PC-3 (cell line): ENCODE measurements at regions of chr4 and their contacts with region 1.

Region 1: GRCh38 chr4:142353149-142353738 is 492.9 kb downstream of the INPP4B start:
- DNase-seq: peak; percentile 88
- ATAC-seq: peak; percentile 55
- H3K4me3 ChIP-seq: no peak overlapping the region; the same call in 1 of the 2 replicates
- H3K27ac ChIP-seq: peak overlapping the region; percentile 31
- H3K4me1 ChIP-seq: peaks cover 46% of the 10 kb centered on the region
- H3K27me3 ChIP-seq: no peaks in the 10 kb centered on the region
- CTCF ChIP-seq: peak; percentile 96

Region 2: DNA sequence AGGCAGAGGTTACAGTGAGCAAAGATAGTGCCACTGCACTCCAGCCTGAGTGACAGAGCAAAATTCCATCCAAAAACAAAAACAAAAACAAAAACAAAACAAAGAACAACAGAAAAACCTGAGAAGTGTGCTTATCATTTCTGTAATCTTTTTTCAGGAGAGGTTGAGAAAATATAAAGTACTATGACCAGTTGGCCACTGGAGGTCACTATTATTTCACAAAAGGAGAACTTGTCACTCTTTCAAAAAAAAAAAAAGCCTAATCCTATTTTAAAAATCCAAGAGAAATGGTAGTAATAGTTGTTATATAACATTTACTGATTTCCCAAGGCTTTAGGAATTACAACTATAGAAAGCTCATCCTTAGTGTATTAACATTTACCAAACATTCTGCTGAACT is 1195.0 kb before region 1 on chr4:
- CTCF ChIA-PET with region 1: no interaction called
- POLR2A ChIA-PET with region 1: no interaction called
- intact Hi-C with region 1: loop called (anchors 5 kb)
- DNase-seq: peak; percentile 51
- ATAC-seq: no peak
- H3K4me3 ChIP-seq: no peak overlapping the region
- H3K27ac ChIP-seq: no peak overlapping the region
- H3K4me1 ChIP-seq: no peaks in the 10 kb centered on the region
- H3K27me3 ChIP-seq: no peaks in the 10 kb centered on the region
- CTCF ChIP-seq: peak; percentile 77

Region 3: GRCh38 chr4:141480950-141481349 is 872.3 kb before region 1 on chr4:
- CTCF ChIA-PET with region 1: no interaction called
- POLR2A ChIA-PET with region 1: no interaction called
- intact Hi-C with region 1: no loop called
- DNase-seq: no peak
- ATAC-seq: no peak
- H3K4me3 ChIP-seq: no peak overlapping the region
- H3K27ac ChIP-seq: no peak overlapping the region
- H3K4me1 ChIP-seq: no peaks in the 10 kb centered on the region
- H3K27me3 ChIP-seq: no peaks in the 10 kb centered on the region
- CTCF ChIP-seq: no peak

Region 4: GRCh38 chr4:142142366-142143054 is 210.7 kb before region 1 on chr4:
- CTCF ChIA-PET with region 1: no interaction called
- POLR2A ChIA-PET with region 1: no interaction called
- intact Hi-C with region 1: loop called (anchors 5 kb)
- DNase-seq: peak; percentile 31
- ATAC-seq: peak; percentile 32; the same call in 1 of the 2 replicates
- H3K4me3 ChIP-seq: no peak overlapping the region
- H3K27ac ChIP-seq: peak overlapping the region; percentile 20
- H3K4me1 ChIP-seq: peaks cover 39% of the 10 kb centered on the region
- H3K27me3 ChIP-seq: no peaks in the 10 kb centered on the region
- CTCF ChIP-seq: no peak

Region 5: GRCh38 chr4:142405021-142405694 is 51.9 kb after region 1 on chr4:
- CTCF ChIA-PET with region 1: no interaction called
- POLR2A ChIA-PET with region 1: no interaction called
- intact Hi-C with region 1: loop called (anchors 1 kb)
- DNase-seq: peak; percentile 69
- ATAC-seq: peak; percentile 16
- H3K4me3 ChIP-seq: peak overlapping the region; percentile 64
- H3K27ac ChIP-seq: peak overlapping the region; percentile 97
- H3K4me1 ChIP-seq: peaks cover 56% of the 10 kb centered on the region
- H3K27me3 ChIP-seq: no peaks in the 10 kb centered on the region
- CTCF ChIP-seq: no peak

Region 6: GRCh38 chr4:142516670-142517526 is 163.7 kb after region 1 on chr4:
- CTCF ChIA-PET with region 1: no interaction called
- POLR2A ChIA-PET with region 1: no interaction called
- intact Hi-C with region 1: loop called (anchors 1 kb)
- DNase-seq: peak; percentile 76
- ATAC-seq: peak; percentile 45
- H3K4me3 ChIP-seq: no peak overlapping the region
- H3K27ac ChIP-seq: peak overlapping the region; percentile 16
- H3K4me1 ChIP-seq: peaks cover 47% of the 10 kb centered on the region
- H3K27me3 ChIP-seq: no peaks in the 10 kb centered on the region
- CTCF ChIP-seq: no peak

Region 7: DNA sequence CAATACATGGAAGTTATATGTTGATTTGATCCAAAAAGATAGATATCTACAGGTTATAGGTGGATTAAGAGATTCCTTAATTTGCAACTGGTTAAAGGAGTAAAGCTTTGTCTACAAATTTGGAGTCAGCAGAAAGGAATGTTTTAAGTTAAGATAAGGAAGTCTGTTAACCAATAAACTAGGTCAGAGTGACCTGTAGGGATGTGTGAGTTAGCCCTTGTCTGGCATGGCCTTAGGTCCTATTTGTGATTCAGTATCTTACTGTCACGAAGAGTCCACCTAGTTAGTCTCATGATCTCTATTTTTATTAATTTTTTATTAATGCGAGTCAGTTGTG is 262.0 kb after region 1 on chr4:
- CTCF ChIA-PET with region 1: no interaction called
- POLR2A ChIA-PET with region 1: no interaction called
- intact Hi-C with region 1: loop called (anchors 5 kb)
- DNase-seq: peak; percentile 97
- ATAC-seq: peak; percentile 90
- H3K4me3 ChIP-seq: peak overlapping the region; percentile 50
- H3K27ac ChIP-seq: peak overlapping the region; percentile 98
- H3K4me1 ChIP-seq: peaks cover 44% of the 10 kb centered on the region
- H3K27me3 ChIP-seq: no peaks in the 10 kb centered on the region
- CTCF ChIP-seq: no peak

Region 8: GRCh38 chr4:142846729-142847596 is 493.7 kb after region 1 on chr4:
- CTCF ChIA-PET with region 1: no interaction called
- POLR2A ChIA-PET with region 1: no interaction called
- intact Hi-C with region 1: loop called (anchors 2 kb)
- DNase-seq: peak; percentile 90
- ATAC-seq: peak; percentile 75
- H3K4me3 ChIP-seq: peak overlapping the region; percentile 92
- H3K27ac ChIP-seq: peak overlapping the region; percentile 17
- H3K4me1 ChIP-seq: peaks cover 34% of the 10 kb centered on the region
- H3K27me3 ChIP-seq: no peaks in the 10 kb centered on the region
- CTCF ChIP-seq: peak; percentile 87